ENCODE measurements at regions of chr17 and their contacts with region 1.

Region 1: GRCh38 chr17:49180303-49180702 is 30.1 kb downstream of the GNGT2 start:
- DNase-seq: no peak
- H3K4me3 ChIP-seq: no peak overlapping the region
- CTCF ChIP-seq: peak; percentile 70

Region 2: GRCh38 chr17:49146620-49147306 is 33.5 kb before region 1 on chr17:
- CTCF ChIA-PET with region 1: interaction called, 15 read pairs
- POLR2A ChIA-PET with region 1: no interaction called
- DNase-seq: peak; percentile 99
- H3K4me3 ChIP-seq: no peak overlapping the region
- CTCF ChIP-seq: no peak

Region 3: GRCh38 chr17:49157784-49158183 is 22.5 kb before region 1 on chr17:
- CTCF ChIA-PET with region 1: interaction called, 16 read pairs
- POLR2A ChIA-PET with region 1: no interaction called
- DNase-seq: no peak
- H3K4me3 ChIP-seq: no peak overlapping the region
- CTCF ChIP-seq: no peak

Region 4: DNA sequence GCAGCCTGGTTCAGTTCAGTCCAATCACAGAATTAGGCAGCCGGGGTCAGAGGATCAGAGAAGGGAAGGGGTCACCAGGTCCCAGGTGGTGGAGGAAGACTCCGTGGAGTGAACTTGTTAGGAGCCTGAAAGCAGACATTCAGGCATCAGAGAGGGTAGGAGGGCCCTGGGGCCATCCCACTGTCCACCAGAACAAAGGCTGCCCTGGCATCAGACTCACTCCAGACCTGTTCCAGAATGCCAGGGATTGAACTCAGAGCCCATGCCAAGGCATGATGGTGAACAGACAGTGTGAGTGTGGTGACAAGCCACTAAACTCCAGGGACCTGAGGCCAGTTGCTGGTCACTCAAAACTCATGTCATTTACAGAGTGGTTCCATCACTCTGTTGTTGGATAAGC is 10.1 kb before region 1 on chr17:
- CTCF ChIA-PET with region 1: interaction called, 49 read pairs
- POLR2A ChIA-PET with region 1: interaction called, 3 read pairs
- DNase-seq: no peak
- H3K4me3 ChIP-seq: no peak overlapping the region
- CTCF ChIP-seq: no peak

Region 5: GRCh38 chr17:49191917-49192741 is 11.8 kb after region 1 on chr17:
- CTCF ChIA-PET with region 1: interaction called, 54 read pairs
- POLR2A ChIA-PET with region 1: no interaction called
- DNase-seq: peak; percentile 41
- H3K4me3 ChIP-seq: peak overlapping the region; percentile 83
- CTCF ChIP-seq: peak; percentile 40

Region 6: GRCh38 chr17:49201481-49201927 is 21.2 kb after region 1 on chr17:
- CTCF ChIA-PET with region 1: interaction called, 12 read pairs
- POLR2A ChIA-PET with region 1: no interaction called
- DNase-seq: peak; percentile 46
- H3K4me3 ChIP-seq: no peak overlapping the region
- CTCF ChIP-seq: no peak

Region 7: GRCh38 chr17:49327835-49328784 is 147.8 kb after region 1 on chr17:
- CTCF ChIA-PET with region 1: no interaction called
- POLR2A ChIA-PET with region 1: no interaction called
- DNase-seq: no peak
- H3K4me3 ChIP-seq: no peak overlapping the region
- CTCF ChIP-seq: no peak